ENCODE measurements at regions of chr3 and their contacts with region 1.

Region 1: DNA sequence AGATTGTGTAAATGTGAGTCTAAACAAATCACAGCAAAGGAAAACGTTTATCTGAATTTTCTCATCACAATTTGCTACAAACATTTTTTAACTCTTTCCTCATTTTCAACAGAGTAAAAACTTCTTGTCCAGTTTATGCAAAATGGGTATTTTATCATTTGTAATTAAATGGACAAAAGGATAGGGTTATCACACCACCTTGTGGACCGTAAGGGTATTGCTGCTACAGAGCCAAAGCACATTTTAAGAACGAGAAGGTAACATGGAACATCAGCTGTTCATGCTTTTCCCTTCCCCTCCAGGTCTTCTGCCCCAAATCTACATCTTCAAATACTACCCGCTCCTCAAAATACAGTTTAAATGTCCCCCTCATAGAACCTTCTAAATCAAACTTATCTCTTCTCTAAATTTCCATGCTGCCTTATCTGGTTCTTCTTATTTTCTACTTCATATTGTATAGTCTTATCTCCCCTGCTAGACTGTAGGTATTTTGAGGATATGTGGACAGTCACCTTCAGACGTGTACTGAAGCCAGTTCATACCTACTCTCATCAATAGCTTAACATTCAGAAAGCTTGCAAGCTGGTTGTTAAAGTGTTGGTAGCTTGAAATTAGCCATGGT is 12.8 kb upstream of the SETMAR start:
- DNase-seq: no peak
- H3K4me3 ChIP-seq: no peak overlapping the region
- H3K27me3 ChIP-seq: no peaks in the 10 kb centered on the region
- CTCF ChIP-seq: peak; percentile 86

Region 2: GRCh38 chr3:3200632-3201212 is 1089.7 kb before region 1 on chr3:
- CTCF ChIA-PET with region 1: interaction called, 17 read pairs
- POLR2A ChIA-PET with region 1: no interaction called
- DNase-seq: no peak
- H3K4me3 ChIP-seq: no peak overlapping the region
- H3K27me3 ChIP-seq: no peaks in the 10 kb centered on the region
- CTCF ChIP-seq: peak; percentile 80

Region 3: DNA sequence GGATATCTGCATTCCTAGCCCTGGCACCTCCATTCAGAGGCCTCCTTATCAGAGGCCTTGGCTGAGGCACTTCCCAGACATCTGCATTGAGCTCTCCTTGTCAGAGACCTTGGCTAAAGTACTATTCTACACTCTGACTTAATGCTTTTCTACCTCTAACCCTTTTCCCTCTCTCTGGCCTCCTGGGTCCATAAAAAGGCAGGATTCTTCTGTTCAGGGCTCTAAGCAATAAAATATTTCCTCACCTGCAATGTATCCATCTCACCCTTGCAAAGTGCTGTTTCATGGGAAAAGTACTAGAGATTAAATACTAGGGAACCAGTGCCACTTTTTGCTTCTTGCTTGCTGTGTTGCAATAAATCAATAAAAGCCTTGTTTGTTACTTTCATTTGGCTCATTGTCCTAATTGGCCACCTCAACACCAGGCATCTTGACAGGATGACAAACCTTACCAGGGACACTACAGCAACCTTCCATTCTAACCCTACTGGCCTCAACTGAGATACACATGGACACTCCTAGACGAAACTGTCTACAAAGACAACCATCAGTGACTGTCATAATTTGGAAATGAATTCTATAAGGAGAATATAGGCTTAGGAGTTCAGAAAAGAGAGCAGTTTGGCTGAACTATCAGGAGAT is 93.8 kb before region 1 on chr3:
- CTCF ChIA-PET with region 1: no interaction called
- POLR2A ChIA-PET with region 1: interaction called, 23 read pairs
- DNase-seq: no peak
- H3K4me3 ChIP-seq: no peak overlapping the region
- H3K27me3 ChIP-seq: no peaks in the 10 kb centered on the region
- CTCF ChIP-seq: no peak

Region 4: DNA sequence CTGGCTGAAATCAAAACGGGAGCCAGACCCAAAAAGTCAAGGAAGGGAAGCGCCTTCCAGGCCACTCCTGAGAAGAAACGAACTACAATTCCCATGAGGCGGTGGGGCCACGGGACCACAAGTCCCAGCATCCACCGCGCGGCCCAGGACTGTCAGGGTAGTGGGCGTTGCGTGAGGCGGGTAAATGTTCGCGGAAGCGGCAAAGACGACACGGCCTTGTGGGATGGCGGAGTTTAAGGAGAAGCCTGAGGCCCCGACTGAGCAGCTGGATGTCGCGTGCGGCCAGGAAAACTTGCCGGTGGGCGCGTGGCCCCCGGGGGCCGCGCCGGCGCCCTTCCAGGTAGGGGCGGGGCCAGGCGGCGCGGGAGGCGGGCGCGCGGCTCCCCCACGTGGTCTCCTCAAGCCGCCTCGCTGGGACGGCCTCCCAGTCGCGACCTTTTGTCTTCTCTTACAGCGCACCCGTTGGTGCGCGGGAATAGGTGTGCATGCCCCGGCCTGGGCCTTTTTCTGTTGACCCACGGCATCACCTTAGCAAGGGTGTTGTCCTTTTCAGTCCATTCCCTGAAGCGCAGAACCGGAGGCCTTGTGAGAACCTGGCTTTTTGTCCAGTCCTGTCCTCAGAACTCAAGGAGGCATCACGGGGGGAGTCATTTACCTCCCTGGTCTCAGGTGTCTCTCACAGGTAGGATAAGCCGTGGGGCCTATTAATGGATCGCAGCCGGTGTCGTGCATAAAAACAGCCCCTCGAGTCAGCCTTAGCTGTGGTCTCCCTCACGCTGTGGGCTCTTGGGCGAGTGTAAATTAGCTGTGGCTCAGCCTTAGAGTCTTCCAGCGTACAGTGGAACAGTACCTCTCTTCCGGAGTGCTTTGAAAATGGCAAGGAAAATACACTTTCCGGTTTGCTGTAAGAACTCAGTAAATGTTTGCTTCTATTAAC is 13.1 kb after region 1 on chr3 and contains the start of gene SETMAR:
- CTCF ChIA-PET with region 1: interaction called, 11 read pairs
- POLR2A ChIA-PET with region 1: no interaction called
- DNase-seq: peak; percentile 41
- H3K4me3 ChIP-seq: peak within 1 kb of the TSS; percentile 65
- H3K27me3 ChIP-seq: no peaks in the 10 kb centered on the region
- CTCF ChIP-seq: no peak
- polyA plus RNA-seq, gene SETMAR: 9.3 and 13.2 TPM in 2 replicates

Region 5: GRCh38 chr3:4421121-4421520 is 130.7 kb after region 1 on chr3:
- CTCF ChIA-PET with region 1: no interaction called
- POLR2A ChIA-PET with region 1: no interaction called
- DNase-seq: no peak
- H3K4me3 ChIP-seq: no peak overlapping the region
- H3K27me3 ChIP-seq: no peaks in the 10 kb centered on the region
- CTCF ChIP-seq: no peak

Measured in BJ (cell line).